ENCODE measurements at regions of chr2 and their contacts with region 1.

Region 1: DNA sequence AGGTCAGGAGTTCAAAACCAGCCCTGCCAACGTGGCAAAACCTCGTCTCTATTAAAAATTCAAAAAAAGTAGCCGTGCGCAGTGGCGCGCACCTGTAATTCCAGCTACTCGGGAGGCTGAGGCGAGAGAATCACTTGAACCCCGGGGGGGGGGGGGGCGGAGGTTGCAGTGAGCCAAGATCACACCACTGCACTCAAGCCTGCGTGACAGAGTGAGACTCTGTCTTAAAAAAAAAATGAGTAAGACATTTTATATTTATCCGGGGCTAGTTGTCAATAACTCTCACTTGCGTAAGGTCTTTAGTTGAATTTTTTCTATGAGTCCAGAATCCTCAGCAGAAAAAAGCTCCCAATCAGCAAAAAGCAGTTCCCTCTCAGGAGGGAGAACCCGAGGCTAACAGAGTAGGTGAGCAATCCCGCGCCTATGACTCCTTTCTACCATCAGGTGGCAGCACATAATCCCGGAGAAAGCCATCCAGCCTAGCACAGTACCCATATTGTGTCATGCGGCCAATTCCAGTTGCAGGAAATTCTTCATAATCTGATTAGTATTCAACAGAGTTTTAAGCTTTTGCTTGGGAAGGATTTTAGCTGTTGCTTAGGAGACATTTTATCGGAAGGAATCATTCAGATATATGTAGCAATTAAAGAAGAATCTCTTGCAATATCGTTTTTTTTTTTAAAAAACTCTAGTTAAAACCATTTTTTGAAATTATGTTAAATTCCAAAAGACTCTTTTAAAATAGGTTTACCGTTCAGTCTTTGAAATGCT is 11.9 kb upstream of the CRYGA start:
- DNase-seq: peak; percentile 38
- H3K4me3 ChIP-seq: no peak overlapping the region
- H3K27ac ChIP-seq: no peak overlapping the region
- H3K27me3 ChIP-seq: no peaks in the 10 kb centered on the region
- CTCF ChIP-seq: peak; percentile 96

Region 2: GRCh38 chr2:207939342-207940108 is 235.7 kb before region 1 on chr2:
- CTCF ChIA-PET with region 1: no interaction called
- POLR2A ChIA-PET with region 1: no interaction called
- DNase-seq: no peak
- H3K4me3 ChIP-seq: no peak overlapping the region
- H3K27ac ChIP-seq: no peak overlapping the region
- H3K27me3 ChIP-seq: no peaks in the 10 kb centered on the region
- CTCF ChIP-seq: no peak

Region 3: GRCh38 chr2:208128136-208128535 is 47.1 kb before region 1 on chr2:
- CTCF ChIA-PET with region 1: interaction called, 10 read pairs
- POLR2A ChIA-PET with region 1: no interaction called
- DNase-seq: no peak
- H3K4me3 ChIP-seq: no peak overlapping the region
- H3K27ac ChIP-seq: no peak overlapping the region
- H3K27me3 ChIP-seq: peaks cover 7% of the 10 kb centered on the region
- CTCF ChIP-seq: no peak

Region 4: GRCh38 chr2:208148803-208149202 is 26.5 kb before region 1 on chr2:
- CTCF ChIA-PET with region 1: interaction called, 11 read pairs
- POLR2A ChIA-PET with region 1: no interaction called
- DNase-seq: no peak
- H3K4me3 ChIP-seq: no peak overlapping the region
- H3K27ac ChIP-seq: no peak overlapping the region
- H3K27me3 ChIP-seq: peaks cover 3% of the 10 kb centered on the region
- CTCF ChIP-seq: no peak; the same call in 1 of the 2 replicates

Region 5: GRCh38 chr2:208189810-208190503 is 14.7 kb after region 1 on chr2 and contains the start of gene C2orf80:
- CTCF ChIA-PET with region 1: interaction called, 46 read pairs
- POLR2A ChIA-PET with region 1: no interaction called
- DNase-seq: no peak
- H3K4me3 ChIP-seq: no peak within 1 kb of the TSS
- H3K27ac ChIP-seq: no peak within 1 kb of the TSS
- H3K27me3 ChIP-seq: peaks cover 7% of the 10 kb centered on the region
- CTCF ChIP-seq: no peak
- polyA plus RNA-seq, gene C2orf80: not detected in 2 replicates

Region 6: DNA sequence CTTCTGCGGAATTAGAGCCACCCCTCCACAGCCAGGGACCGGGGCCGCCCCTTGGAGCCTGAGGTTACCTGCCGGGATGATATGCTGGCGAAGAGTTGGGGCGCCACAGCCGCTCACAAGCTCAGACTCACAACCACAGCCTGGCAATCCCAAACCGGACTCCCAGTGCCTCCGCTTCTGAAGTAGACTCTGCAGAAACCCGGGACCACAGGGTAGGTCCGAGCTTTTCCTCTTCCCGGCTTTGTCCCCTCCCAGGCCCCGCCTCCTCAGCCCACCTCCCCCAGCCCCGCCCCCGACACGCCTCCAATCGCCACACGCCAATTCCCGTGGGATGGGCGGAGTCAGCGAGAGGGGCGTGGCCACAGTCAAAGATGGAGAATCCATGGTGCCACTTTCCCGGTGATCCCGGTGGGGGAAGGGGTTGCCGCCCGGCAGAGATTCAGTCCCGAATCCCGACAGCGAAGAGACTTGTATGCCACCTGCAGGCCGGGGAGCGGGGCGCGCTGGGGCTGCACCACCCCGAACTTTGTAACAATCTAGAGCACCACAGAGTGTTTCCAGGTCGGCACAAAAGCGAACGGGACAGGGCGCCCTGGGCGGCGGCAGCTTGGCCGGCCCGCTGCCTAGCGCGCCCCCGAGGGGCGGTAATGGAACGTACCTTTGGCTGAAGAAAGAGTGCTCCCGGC is 79.8 kb after region 1 on chr2 and contains the start of gene IDH1:
- CTCF ChIA-PET with region 1: interaction called, 73 read pairs
- POLR2A ChIA-PET with region 1: no interaction called
- DNase-seq: peak; percentile 82
- H3K4me3 ChIP-seq: peak within 1 kb of the TSS; percentile 85
- H3K27ac ChIP-seq: peak within 1 kb of the TSS; percentile 42
- H3K27me3 ChIP-seq: no peaks in the 10 kb centered on the region
- CTCF ChIP-seq: peak; percentile 62
- polyA plus RNA-seq, gene IDH1: 111 and 148 TPM in 2 replicates

Measured in AG04450 (cell line).